Activated B cell treated with CpG ODN at 0.5 μM for 24 hours (primary cell): ENCODE measurements at regions of chr13 and their contacts with region 1.

Region 1: GRCh38 chr13:49627831-49628652 is at the start of gene ARL11:
- DNase-seq: peak; percentile 78
- ATAC-seq: peak; percentile 98
- H3K4me3 Mint-ChIP-seq: peak within 1 kb of the TSS; percentile 99
- H3K27ac Mint-ChIP-seq: peak within 1 kb of the TSS; percentile 98
- H3K4me1 Mint-ChIP-seq: peaks cover 37% of the 10 kb centered on the region
- H3K27me3 Mint-ChIP-seq: no peaks in the 10 kb centered on the region
- CTCF ChIP-seq: no peak
- total RNA-seq, gene ARL11: 9.5 and 10.7 TPM in 2 replicates

Region 2: GRCh38 chr13:49585220-49586157 is 42.6 kb before region 1 on chr13 and contains the start of gene RCBTB1:
- CTCF ChIA-PET with region 1: no interaction called
- POLR2A ChIA-PET with region 1: interaction called, 8 read pairs
- intact Hi-C with region 1: loop called (anchors 1 kb)
- DNase-seq: peak; percentile 73
- ATAC-seq: peak; percentile 87
- H3K4me3 Mint-ChIP-seq: peak within 1 kb of the TSS; percentile 90
- H3K27ac Mint-ChIP-seq: peak within 1 kb of the TSS; percentile 86
- H3K4me1 Mint-ChIP-seq: peaks cover 31% of the 10 kb centered on the region
- H3K27me3 Mint-ChIP-seq: no peaks in the 10 kb centered on the region
- CTCF ChIP-seq: no peak
- total RNA-seq, gene RCBTB1: 19.7 and 22.6 TPM in 2 replicates

Region 3: DNA sequence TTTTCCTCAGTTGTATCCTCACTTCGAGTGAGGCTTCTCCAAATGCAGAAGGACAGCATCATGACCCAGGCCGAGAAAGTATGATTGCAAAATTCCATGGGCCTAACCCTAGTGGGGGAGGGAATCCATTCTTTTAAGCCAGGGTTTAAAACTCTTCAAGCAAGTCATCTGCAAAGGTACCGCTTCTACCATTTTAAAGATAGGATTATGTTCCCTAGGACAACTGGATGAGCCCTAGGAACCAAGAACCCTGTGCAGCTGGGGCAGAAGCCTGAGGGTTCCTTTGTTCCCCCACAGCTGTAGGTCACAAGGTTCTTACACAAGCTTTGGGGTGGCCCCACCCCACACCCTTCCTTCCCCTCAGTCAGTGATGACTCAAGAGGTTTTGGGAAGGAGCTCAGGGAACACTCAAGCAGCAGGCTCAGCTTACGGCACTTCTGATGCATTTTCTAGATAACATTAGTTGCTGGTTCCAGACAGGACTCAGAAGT is 13.8 kb after region 1 on chr13:
- CTCF ChIA-PET with region 1: interaction called, 3 read pairs
- POLR2A ChIA-PET with region 1: interaction called, 6 read pairs
- intact Hi-C with region 1: loop called (anchors 2 kb)
- DNase-seq: no peak
- ATAC-seq: no peak
- H3K4me3 Mint-ChIP-seq: peak overlapping the region; percentile 24
- H3K27ac Mint-ChIP-seq: no peak overlapping the region
- H3K4me1 Mint-ChIP-seq: peaks cover 34% of the 10 kb centered on the region
- H3K27me3 Mint-ChIP-seq: no peaks in the 10 kb centered on the region
- CTCF ChIP-seq: no peak